ENCODE measurements at regions of chr7 and their contacts with region 1.

Region 1: GRCh38 chr7:39697483-39697882 is 74.1 kb downstream of the RALA start:
- DNase-seq: no peak
- ATAC-seq: no peak
- H3K4me3 Mint-ChIP-seq: no peak overlapping the region
- H3K27ac Mint-ChIP-seq: no peak overlapping the region
- H3K4me1 Mint-ChIP-seq: no peaks in the 10 kb centered on the region
- H3K27me3 Mint-ChIP-seq: no peaks in the 10 kb centered on the region
- CTCF ChIP-seq: no peak

Region 2: GRCh38 chr7:39580149-39580874 is 117.2 kb before region 1 on chr7:
- CTCF ChIA-PET with region 1: interaction called, 6 read pairs
- POLR2A ChIA-PET with region 1: no interaction called
- intact Hi-C with region 1: loop called (anchors 5 kb)
- DNase-seq: peak; percentile 39
- ATAC-seq: peak; percentile 97
- H3K4me3 Mint-ChIP-seq: no peak overlapping the region
- H3K27ac Mint-ChIP-seq: no peak overlapping the region
- H3K4me1 Mint-ChIP-seq: peaks cover 3% of the 10 kb centered on the region
- H3K27me3 Mint-ChIP-seq: no peaks in the 10 kb centered on the region
- CTCF ChIP-seq: no peak

Region 3: GRCh38 chr7:40047661-40048060 is 350.2 kb after region 1 on chr7:
- CTCF ChIA-PET with region 1: no interaction called
- POLR2A ChIA-PET with region 1: no interaction called
- intact Hi-C with region 1: no loop called
- DNase-seq: no peak
- ATAC-seq: no peak
- H3K4me3 Mint-ChIP-seq: no peak overlapping the region
- H3K27ac Mint-ChIP-seq: no peak overlapping the region
- H3K4me1 Mint-ChIP-seq: peaks cover 1% of the 10 kb centered on the region
- H3K27me3 Mint-ChIP-seq: no peaks in the 10 kb centered on the region
- CTCF ChIP-seq: no peak

Measured in activated B cell treated with CpG ODN at 0.5 μM for 24 hours (primary cell).